CD14-positive monocyte (primary cell): ENCODE measurements at regions of chr12 and their contacts with region 1.

Region 1: DNA sequence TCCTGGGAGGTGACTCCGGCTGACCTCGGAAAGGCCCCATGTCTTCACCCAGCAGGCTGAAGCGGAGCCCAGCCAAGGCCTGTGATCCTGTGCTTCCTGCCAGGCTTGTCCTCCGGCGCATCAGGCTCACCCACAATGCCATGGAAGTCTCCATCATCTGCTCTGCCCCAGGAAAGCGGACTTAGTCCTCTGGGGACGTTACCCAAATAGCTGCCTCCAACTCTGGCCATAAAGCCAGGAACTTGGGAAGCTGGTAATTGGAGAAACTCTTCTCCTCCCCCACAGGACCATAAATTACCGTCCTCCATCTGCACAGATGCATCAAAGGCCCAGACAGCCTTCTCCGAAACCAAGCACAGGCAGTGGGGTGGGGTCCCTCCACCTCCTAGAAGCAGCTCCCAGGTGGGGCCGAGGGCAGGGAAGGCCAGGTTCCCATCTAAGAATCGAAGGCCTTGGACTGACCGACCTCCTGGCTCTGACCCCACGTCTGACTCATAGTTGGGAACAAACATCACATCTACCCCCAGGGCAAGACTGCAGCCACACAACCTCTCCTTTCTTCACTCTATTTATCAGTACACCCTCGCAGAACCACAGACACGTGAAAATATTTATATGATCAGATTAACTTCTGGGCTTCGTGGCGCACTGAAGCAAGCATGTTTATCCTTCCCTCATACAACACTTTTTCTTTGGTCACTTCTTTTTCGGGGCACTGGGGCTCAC is 56.4 kb downstream of the PITPNM2 start:
- DNase-seq: no peak
- H3K4me3 ChIP-seq: no peak overlapping the region
- H3K4me3 Mint-ChIP-seq: no peak overlapping the region
- H3K27ac ChIP-seq: no peak overlapping the region
- H3K27ac Mint-ChIP-seq: peak overlapping the region in 1 of 7 donors; percentile 5
- H3K4me1 ChIP-seq: peaks cover 27 to 30% of the 10 kb centered on the region in 2 donors
- H3K4me1 Mint-ChIP-seq: peaks cover 26% of the 10 kb centered on the region
- H3K27me3 ChIP-seq: no peaks in the 10 kb centered on the region
- H3K27me3 Mint-ChIP-seq: peaks cover 0 to 3% (median 2%) of the 10 kb centered on the region in 3 donors
- CTCF ChIP-seq: no peak

Region 2: GRCh38 chr12:123062681-123063486 is 31.6 kb before region 1 on chr12:
- intact Hi-C with region 1: loop called in 1 of 2 experiments (anchors 5 kb)
- DNase-seq: peak; percentile 67 to 73 (median 71)
- H3K4me3 ChIP-seq: no peak overlapping the region
- H3K4me3 Mint-ChIP-seq: no peak overlapping the region
- H3K27ac ChIP-seq: peak overlapping the region; percentile 50 to 62
- H3K27ac Mint-ChIP-seq: peak overlapping the region; percentile 62 to 81 (median 76)
- H3K4me1 ChIP-seq: peaks cover 44 to 47% of the 10 kb centered on the region in 2 donors
- H3K4me1 Mint-ChIP-seq: peaks cover 61% of the 10 kb centered on the region
- H3K27me3 ChIP-seq: no peaks in the 10 kb centered on the region
- H3K27me3 Mint-ChIP-seq: peaks cover 0 to 2% (median 1%) of the 10 kb centered on the region in 3 donors
- CTCF ChIP-seq: no peak